HAP-1 (cell line): ENCODE measurements at regions of chr18 and their contacts with region 1.

Region 1: DNA sequence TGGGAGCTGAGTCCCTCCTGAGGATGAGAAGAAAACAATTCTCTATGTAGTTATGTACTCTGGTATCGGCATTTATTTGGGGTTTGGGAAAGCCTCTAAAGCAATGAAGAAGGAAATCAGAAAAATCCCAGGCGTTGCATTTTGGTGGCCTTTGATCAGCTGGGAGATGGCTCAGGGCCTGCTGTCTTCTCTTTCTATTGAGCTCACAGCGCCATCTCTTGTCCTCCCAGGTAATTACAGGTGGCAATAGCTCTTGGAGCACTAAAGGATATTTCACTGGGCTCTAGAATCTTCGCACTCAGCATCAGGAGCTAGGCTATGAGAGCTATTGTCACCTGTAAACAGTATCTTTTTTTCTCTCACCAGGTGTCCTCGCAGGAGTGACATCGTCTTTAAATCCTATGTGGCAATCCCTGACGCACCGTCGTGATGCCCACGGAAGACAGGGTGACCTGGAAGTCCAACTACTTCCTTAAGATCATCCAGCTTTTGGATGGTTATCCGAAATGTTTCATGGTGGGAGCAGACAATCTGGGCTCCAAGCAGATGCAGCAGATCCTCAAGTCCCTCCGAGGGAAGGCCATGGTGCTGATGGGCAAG is 76.1 kb upstream of the PMAIP1 start:
- DNase-seq: peak; percentile 40 to 81
- H3K4me3 ChIP-seq: no peak overlapping the region
- H3K4me1 ChIP-seq: no peaks in the 10 kb centered on the region
- H3K27me3 ChIP-seq: 0 out of 2 replicates have a peak, but pooled peaks cover 4% of the 10 kb centered on the region

Region 2: GRCh38 chr18:59459369-59460079 is 364.2 kb before region 1 on chr18:
- in situ Hi-C with region 1: loop called (anchors 5 kb)
- DNase-seq: peak in 1 of 2 experiments; percentile 11
- H3K4me3 ChIP-seq: no peak overlapping the region
- H3K4me1 ChIP-seq: no peaks in the 10 kb centered on the region
- H3K27me3 ChIP-seq: 0 out of 2 replicates have a peak, but pooled peaks cover 3% of the 10 kb centered on the region

Region 3: DNA sequence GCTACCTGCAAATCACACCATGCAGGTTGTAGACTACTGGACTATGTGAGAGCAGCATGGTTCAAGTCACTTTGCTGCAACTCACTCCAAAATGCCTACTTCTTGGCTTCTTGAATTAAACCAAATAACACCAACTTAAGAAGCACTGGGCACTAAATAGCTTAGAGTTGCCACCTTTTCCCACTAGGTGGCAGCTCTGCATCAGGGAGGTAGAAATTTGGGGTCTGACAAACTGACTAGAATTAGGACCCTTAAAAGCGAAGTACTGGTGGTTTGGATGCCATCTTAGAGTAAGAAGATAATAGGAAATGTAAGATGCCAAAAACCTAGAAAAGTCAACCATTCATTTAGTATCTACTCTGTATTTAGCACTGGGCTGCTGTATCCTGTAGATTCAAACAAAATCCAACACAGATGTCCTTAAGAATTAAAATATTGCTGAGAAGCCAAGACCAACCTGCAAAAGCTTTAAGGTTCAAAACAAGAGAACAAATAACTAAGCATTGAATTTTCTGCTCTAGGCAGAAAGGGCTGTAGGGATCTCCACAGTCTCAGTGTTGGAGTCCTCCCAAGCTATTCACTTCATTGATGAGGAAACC is 192.0 kb before region 1 on chr18:
- in situ Hi-C with region 1: loop called (anchors 5 kb)
- DNase-seq: peak in 1 of 2 experiments; percentile 20
- H3K4me3 ChIP-seq: no peak overlapping the region
- H3K4me1 ChIP-seq: no peaks in the 10 kb centered on the region
- H3K27me3 ChIP-seq: no peaks in the 10 kb centered on the region